ENCODE measurements at regions of chr2 and their contacts with region 1.

Region 1: DNA sequence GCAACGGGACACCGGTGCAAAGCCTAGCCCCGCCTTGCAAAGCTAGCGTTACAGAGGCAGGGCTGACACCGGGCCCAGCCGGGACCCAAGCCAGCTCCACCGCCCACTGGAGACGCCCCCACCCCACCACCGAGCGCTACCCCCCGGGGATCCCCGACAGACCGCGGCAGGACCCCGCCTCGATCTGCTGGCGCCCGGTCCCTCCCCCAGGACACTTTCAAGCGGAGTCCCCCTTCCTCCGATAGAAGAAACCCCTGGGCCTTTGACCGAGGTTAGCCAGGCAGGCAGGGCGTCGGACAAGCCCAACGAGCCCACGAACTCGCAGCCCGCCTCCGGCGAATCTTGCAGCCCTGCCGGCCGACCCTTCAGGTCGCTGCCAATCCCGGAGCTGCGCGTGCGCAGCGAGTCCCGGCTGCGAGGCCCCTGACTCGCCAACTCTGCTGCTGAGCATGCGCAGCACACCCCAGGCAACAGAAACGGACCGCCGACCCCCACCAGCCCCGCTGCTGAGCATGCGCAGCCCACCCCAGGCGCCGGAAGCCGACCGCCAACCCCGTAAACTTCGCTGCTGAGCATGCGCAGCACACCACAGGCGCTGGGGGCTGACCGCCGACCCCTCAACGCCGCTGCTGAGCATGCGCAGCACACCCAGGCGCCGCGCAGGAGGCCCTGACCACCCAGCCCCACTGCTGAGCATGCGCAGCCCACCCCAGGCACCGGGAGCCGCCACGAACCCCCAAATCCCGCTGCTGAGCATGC is 656 bp downstream of the ADI1 start:
- DNase-seq: peak; percentile 97 to 99 (median 98)
- H3K4me3 ChIP-seq: peak overlapping the region; percentile 74 to 88
- H3K4me3 Mint-ChIP-seq: peak overlapping the region; percentile 80 to 97 (median 93)
- H3K27ac ChIP-seq: peak overlapping the region; percentile 92
- H3K27ac Mint-ChIP-seq: peak overlapping the region; percentile 79 to 98 (median 95)
- H3K4me1 ChIP-seq: peaks cover 23% of the 10 kb centered on the region
- H3K4me1 Mint-ChIP-seq: peaks cover 32 to 47% (median 38%) of the 10 kb centered on the region in 4 donors
- H3K27me3 ChIP-seq: no peaks in the 10 kb centered on the region
- H3K27me3 Mint-ChIP-seq: no peaks in the 10 kb centered on the region

Region 2: GRCh38 chr2:3558205-3559014 is 39.7 kb after region 1 on chr2 and contains the start of gene RNASEH1:
- CTCF ChIA-PET with region 1: interaction called, 3 read pairs
- POLR2A ChIA-PET with region 1: interaction called, 62 read pairs
- intact Hi-C with region 1: loop called (anchors 1 kb)
- DNase-seq: peak; percentile 96 to 98 (median 96)
- H3K4me3 ChIP-seq: peak within 1 kb of the TSS; percentile 18 to 87
- H3K4me3 Mint-ChIP-seq: peak within 1 kb of the TSS; percentile 89 to 95 (median 91)
- H3K27ac ChIP-seq: peak within 1 kb of the TSS; percentile 90
- H3K27ac Mint-ChIP-seq: peak within 1 kb of the TSS; percentile 93 to 98 (median 97)
- H3K4me1 ChIP-seq: peaks cover 25% of the 10 kb centered on the region
- H3K4me1 Mint-ChIP-seq: peaks cover 4 to 34% (median 24%) of the 10 kb centered on the region in 4 donors
- H3K27me3 ChIP-seq: no peaks in the 10 kb centered on the region
- H3K27me3 Mint-ChIP-seq: no peaks in the 10 kb centered on the region
- total RNA-seq, gene RNASEH1: 22.0 to 24.0 TPM

Region 3: DNA sequence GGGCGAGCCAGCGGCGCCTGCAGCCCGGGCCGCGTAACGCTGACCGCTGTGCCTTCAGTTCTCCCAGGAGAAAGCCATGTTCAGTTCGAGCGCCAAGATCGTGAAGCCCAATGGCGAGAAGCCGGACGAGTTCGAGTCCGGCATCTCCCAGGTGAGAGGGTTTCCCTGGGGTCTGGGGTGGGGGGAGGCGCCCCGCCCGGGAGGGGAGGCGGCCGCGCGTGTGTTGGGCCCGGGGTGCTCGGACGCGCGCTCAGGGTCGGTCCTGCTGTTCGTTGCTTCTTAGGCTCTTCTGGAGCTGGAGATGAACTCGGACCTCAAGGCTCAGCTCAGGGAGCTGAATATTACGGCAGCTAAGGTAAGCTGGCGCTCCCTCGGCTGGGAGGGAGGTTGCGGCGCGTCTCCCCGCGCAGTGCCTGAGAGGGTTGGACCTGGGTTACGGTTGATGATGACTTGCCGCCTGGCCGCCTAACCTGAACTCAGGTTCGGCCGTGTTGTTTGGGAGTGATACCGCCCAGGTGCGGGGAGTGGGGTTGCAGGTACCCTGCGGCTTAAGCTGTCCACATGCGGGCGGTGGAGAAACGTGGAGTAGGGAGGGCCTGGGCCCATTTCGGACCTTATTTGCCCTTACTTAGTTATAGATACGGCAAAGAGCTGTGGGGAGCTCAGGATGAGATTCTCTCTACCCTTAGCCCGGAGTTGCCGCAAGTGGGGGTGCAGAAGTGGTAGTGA is 57.0 kb after region 1 on chr2:
- CTCF ChIA-PET with region 1: no interaction called
- POLR2A ChIA-PET with region 1: interaction called, 31 read pairs
- intact Hi-C with region 1: loop called (anchors 1 kb)
- DNase-seq: peak; percentile 19 to 56 (median 49)
- H3K4me3 ChIP-seq: peak overlapping the region; percentile 65 to 67
- H3K4me3 Mint-ChIP-seq: peak overlapping the region; percentile 87 to 98 (median 92)
- H3K27ac ChIP-seq: peak overlapping the region; percentile 94
- H3K27ac Mint-ChIP-seq: peak overlapping the region; percentile 87 to 99 (median 97)
- H3K4me1 ChIP-seq: peaks cover 46% of the 10 kb centered on the region
- H3K4me1 Mint-ChIP-seq: peaks cover 33 to 49% (median 38%) of the 10 kb centered on the region in 4 donors
- H3K27me3 ChIP-seq: no peaks in the 10 kb centered on the region
- H3K27me3 Mint-ChIP-seq: no peaks in the 10 kb centered on the region

Measured in CD4-positive, alpha-beta memory T cell (primary cell).